ENCODE measurements at regions of chr5 and their contacts with region 1.

Region 1: DNA sequence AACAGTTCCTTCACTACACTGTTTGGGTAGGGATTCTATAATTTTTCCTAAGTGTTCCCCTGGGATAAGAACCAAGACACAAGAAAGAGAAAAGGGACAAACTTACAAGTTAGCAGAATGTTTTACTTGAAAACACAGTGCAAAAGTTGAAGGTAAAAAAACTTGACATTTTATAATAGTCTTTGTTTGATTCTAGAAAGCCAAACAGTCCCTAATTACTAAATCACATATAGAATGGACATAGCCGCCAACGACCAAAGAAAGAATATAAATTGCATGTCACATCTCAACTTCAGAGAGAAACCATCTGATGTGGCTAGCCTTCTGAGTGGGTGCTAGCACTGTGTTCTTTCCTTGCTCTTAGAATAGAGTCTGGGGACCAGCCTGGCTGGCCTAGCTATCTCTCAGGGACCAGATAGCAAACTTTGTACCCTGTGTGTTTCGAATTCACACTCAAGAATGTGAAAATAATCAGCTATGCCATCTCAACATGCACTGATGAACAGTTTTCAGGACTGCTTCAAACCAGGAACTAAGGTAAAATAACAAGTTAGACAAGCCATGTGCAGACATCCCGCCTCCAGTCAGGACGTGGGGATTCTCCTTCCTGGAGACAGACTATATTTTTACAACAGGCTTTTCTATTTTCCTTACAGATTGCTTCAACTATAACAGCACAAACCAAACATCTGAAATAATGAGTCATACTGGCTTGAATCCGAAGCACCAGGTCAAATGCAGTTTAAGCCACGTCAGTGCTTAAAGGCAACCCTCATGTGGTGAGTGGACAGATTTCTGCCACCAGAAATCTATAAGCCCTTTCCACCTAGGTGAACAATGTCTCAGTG is 53.7 kb downstream of the LHFPL2 start:
- DNase-seq: peak in 1 of 2 donors; percentile 43
- ATAC-seq: peak; percentile 65 to 84 (median 80)
- H3K4me3 ChIP-seq: no peak overlapping the region
- H3K27ac ChIP-seq: peak overlapping the region in 7 of 10 donors; percentile 44 to 72 (median 57)
- H3K4me1 ChIP-seq: peaks cover 3 to 78% (median 60%) of the 10 kb centered on the region in 9 donors
- H3K27me3 ChIP-seq: no peaks in the 10 kb centered on the region
- CTCF ChIP-seq: no peak

Region 2: DNA sequence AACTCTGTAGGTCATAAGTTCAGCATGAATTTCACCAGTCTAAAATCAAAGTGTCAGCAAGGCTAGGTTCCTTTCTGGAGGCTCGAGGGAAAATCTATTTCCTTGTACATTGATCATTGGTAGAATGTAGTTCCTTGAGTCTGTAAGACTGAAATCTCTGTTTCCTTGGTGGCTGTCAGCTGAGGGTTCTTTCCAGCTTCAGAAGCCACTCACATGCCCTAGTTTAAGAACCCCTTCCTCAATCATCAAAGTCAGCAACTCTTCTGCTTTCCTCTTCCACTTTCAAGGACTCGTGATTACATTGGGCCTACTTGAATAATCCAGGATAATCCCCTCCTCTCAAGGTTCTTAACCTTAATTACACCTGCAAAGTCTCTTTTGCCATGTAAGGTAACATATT is 239.3 kb before region 1 on chr5:
- intact Hi-C with region 1: no loop called
- DNase-seq: no peak
- ATAC-seq: no peak
- H3K4me3 ChIP-seq: no peak overlapping the region
- H3K27ac ChIP-seq: peak overlapping the region in 1 of 10 donors; percentile 48
- H3K4me1 ChIP-seq: peaks cover 0 to 19% (median 11%) of the 10 kb centered on the region in 9 donors
- H3K27me3 ChIP-seq: no peaks in the 10 kb centered on the region
- CTCF ChIP-seq: no peak

Region 3: GRCh38 chr5:78569448-78569847 is 25.4 kb before region 1 on chr5:
- intact Hi-C with region 1: no loop called
- DNase-seq: peak in 1 of 2 donors; percentile 28
- ATAC-seq: peak in 1 of 8 donors; percentile 13
- H3K4me3 ChIP-seq: no peak overlapping the region
- H3K27ac ChIP-seq: no peak overlapping the region
- H3K4me1 ChIP-seq: peaks cover 0 to 56% (median 38%) of the 10 kb centered on the region in 9 donors
- H3K27me3 ChIP-seq: no peaks in the 10 kb centered on the region
- CTCF ChIP-seq: no peak

Region 4: DNA sequence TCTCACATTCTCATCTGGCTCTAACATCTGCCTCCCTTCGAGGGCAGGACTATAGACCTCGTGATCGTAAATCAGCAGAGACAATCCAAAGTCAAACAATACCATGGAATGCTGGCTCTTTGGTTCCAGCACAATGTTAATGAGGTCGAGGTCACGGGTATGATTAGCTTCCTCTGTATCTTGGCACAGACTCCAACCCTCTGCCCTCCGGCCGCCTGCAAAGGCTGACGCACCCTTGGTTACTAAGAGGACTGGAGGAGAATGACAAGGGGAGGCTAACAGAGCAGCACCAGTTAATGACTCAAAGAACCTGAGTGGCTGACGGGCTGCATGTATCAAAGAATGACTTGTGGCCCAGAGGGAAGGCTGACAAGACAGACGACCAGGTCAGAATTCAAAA is 43.6 kb after region 1 on chr5:
- intact Hi-C with region 1: loop called in 2 of 10 experiments (anchors 5 kb)
- DNase-seq: peak; percentile 53 to 76
- ATAC-seq: peak; percentile 88 to 97 (median 94)
- H3K4me3 ChIP-seq: peak overlapping the region in 1 of 10 donors; percentile 1
- H3K27ac ChIP-seq: peak overlapping the region in 8 of 10 donors; percentile 17 to 67 (median 52)
- H3K4me1 ChIP-seq: peaks cover 11 to 70% (median 52%) of the 10 kb centered on the region in 9 donors
- H3K27me3 ChIP-seq: no peaks in the 10 kb centered on the region
- CTCF ChIP-seq: no peak

Region 5: DNA sequence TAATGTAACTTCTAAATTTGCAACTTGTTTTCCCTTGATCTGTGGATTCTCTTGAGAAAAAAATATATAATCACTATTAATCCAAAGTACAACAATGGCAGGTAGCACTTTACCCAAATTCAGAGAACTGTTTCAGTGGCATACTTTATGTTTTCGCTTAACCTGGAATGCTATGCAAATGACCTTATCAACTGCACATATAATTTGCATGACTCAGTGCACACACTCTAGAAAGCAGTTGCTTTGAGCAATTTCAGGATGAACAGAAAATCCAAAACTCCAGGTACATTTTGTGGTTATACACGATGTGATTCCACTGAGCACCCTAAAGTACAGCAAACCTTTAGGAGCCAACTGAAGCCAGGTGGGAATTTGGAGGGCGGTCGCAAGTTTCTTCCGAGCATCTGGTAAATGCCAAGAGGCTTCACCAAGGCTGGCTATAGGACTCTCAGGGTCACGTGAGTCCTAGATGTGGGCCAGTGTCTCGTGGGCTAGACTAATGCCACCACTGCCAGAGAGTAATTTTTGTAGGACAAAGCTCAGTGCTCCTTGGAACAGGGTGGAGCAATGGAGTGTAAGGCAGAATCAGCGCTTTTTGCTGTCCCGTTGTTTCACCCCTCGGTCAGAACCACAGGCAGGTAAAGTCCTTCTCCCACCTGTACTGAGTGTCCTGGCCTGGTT is 437.3 kb after region 1 on chr5:
- intact Hi-C with region 1: no loop called
- DNase-seq: no peak
- ATAC-seq: no peak
- H3K4me3 ChIP-seq: no peak overlapping the region
- H3K27ac ChIP-seq: no peak overlapping the region
- H3K4me1 ChIP-seq: no peaks in the 10 kb centered on the region
- H3K27me3 ChIP-seq: no peaks in the 10 kb centered on the region
- CTCF ChIP-seq: no peak

Measured in heart right ventricle (tissue), 16 donors.